ENCODE measurements at regions of chr5 and their contacts with region 1.

Region 1: DNA sequence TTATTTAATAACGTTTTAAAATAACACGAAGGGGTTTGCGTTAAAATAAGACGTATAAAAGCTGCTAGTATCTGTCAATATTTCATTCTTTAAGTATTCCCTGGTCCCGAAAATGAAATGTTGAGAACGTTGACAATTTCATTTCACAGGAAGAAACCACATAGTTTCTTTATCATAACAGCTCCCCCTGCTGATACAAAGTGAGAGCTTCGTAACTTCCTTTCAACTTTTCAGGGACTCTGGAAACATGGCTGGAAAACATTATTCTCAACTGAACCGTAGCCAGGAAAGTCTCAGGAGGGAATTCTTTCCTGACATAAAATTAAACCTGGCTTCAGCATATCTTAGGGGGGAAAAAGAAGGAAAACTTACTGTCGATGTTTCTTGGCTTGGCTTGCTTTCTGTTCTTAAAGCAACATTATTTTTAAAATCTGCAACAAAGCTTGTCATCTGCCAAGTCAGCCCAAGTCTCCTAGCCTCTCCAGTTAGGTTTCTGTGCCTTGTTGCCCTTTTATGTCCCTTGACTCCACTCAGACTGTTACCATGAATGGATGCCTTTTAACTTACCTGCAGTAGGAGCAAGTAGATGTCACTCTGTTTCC is 122.9 kb upstream of the DAB2 start:
- DNase-seq: peak in 1 of 2 donors; percentile 8
- H3K4me3 ChIP-seq: no peak overlapping the region
- H3K27ac ChIP-seq: peak overlapping the region in 1 of 3 donors; percentile 19
- H3K4me1 ChIP-seq: peaks cover 0 to under 1% of the 10 kb centered on the region in 2 donors
- H3K27me3 ChIP-seq: no peaks in the 10 kb centered on the region
- CTCF ChIP-seq: peak in 5 of 6 experiments; percentile 25 to 78 (median 73)
- POLR2A ChIP-seq: no peak

Region 2: DNA sequence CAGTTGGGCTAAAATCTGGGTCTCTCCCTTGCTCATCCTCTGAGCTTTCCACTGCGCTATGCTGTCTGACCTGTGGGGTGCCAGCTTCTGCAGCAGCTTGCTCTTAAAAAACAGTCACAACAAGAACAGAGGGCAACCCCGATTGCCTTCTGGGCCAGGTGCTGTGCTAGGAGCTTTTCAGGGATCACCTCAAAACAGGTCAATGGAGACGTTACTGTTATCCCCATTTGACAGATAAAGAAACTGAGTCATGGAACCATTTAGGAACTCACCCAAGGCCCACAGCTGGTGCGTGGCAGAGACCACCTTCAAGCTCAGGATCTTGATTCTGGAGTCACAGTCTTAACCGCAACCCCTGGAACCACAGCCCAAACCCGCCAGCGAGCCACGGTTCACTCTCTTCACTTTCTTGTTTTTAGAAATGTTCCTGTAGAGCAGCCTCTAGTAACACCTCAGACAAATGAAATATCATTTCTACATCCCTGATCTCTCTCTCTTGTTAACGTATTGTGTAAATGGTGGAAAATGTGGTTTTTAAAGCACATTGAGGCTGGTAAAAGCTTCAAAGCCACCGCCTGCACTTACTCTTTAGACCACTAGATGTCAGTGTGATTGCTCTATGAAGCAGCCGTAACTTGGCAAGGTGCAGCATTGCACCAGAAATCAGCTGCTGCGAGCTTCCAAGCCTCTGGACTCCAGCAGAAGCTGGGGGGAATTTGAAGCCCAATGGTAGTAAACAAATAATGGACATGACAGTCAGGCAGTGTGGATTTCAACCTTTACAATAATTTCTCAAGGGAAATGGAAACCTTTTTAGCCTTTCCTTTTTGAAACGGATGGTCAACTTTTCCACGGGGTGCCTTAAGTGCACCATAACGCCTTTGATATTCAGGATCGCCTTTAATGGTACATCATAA is 330.0 kb before region 1 on chr5:
- intact Hi-C with region 1: loop called (anchors 5 kb)
- DNase-seq: peak; percentile 76 to 79
- H3K4me3 ChIP-seq: no peak overlapping the region
- H3K27ac ChIP-seq: no peak overlapping the region
- H3K4me1 ChIP-seq: peaks cover 0 to 4% of the 10 kb centered on the region in 2 donors
- H3K27me3 ChIP-seq: no peaks in the 10 kb centered on the region
- CTCF ChIP-seq: peak; percentile 83 to 98 (median 92)
- POLR2A ChIP-seq: no peak

Region 3: GRCh38 chr5:39376293-39376714 is 171.3 kb before region 1 on chr5:
- intact Hi-C with region 1: loop called (anchors 2 kb)
- DNase-seq: peak; percentile 23 to 30
- H3K4me3 ChIP-seq: no peak overlapping the region
- H3K27ac ChIP-seq: no peak overlapping the region
- H3K4me1 ChIP-seq: peaks cover 0 to 3% of the 10 kb centered on the region in 2 donors
- H3K27me3 ChIP-seq: no peaks in the 10 kb centered on the region
- CTCF ChIP-seq: peak; percentile 53 to 82 (median 70)
- POLR2A ChIP-seq: no peak

Region 4: DNA sequence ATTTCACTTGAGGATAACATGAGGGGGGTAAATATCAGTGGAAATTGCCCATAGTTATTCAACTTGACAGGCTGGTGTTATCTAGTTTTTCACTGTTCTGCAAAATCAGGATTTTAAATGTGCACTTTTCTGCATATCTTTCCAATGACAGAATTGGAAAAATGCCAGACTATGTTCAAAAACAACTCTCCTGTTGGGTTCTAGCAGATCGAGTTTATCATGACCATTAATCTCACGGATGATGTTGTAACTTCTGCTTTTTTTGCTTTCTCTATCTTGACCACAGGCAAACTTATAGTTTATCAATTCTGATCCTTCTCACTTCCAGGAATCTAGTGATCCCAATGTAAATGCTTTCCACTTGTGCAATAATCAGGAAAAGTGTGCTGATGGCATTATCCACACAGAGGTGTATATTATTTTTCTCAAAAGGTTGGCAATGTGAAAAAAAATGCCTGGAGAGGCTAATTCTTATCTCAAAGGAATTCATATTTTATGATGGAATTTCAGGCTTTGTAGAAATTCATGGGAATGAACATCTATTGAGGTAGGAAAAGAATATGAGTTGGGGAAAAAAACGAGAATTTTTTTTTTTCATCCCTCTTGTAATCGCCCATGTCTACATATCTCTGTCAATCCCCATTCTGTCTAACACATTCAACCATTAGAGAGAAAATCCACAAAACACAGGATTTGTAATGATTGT is 49.3 kb before region 1 on chr5:
- intact Hi-C with region 1: no loop called
- DNase-seq: no peak
- H3K4me3 ChIP-seq: no peak overlapping the region
- H3K27ac ChIP-seq: no peak overlapping the region
- H3K4me1 ChIP-seq: peaks cover 5 to 19% of the 10 kb centered on the region in 2 donors
- H3K27me3 ChIP-seq: no peaks in the 10 kb centered on the region
- CTCF ChIP-seq: no peak
- POLR2A ChIP-seq: no peak

Region 5: DNA sequence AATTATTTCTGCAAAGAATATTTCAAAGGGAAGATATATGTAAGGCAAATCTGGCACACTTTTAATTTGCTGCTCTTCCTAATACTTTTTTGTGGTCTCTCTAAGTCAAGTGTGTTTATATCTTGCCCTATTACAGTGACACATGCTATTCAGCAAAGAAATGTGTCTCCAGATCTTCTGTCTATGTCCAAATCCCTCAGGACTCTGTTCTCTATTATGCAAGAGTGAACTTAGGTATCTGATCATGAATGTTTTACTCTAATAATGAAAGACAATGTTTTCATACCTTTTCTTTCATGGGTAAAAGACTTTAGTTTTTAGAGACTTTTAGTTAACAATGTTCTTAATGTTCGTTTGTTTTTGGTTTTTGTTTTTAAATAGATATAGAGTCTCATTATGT is 132.6 kb after region 1 on chr5:
- intact Hi-C with region 1: no loop called
- DNase-seq: no peak
- H3K4me3 ChIP-seq: no peak overlapping the region
- H3K27ac ChIP-seq: no peak overlapping the region
- H3K4me1 ChIP-seq: no peaks in the 10 kb centered on the region
- H3K27me3 ChIP-seq: no peaks in the 10 kb centered on the region
- CTCF ChIP-seq: no peak
- POLR2A ChIP-seq: no peak